ENCODE measurements at regions of chr7 and their contacts with region 1.

Region 1: GRCh38 chr7:19747740-19748339 is 25.6 kb downstream of the TMEM196 start:
- DNase-seq: peak; percentile 49
- ATAC-seq: peak; percentile 87
- H3K4me3 ChIP-seq: no peak overlapping the region
- H3K27ac ChIP-seq: no peak overlapping the region
- H3K4me1 ChIP-seq: no peaks in the 10 kb centered on the region
- H3K27me3 ChIP-seq: no peaks in the 10 kb centered on the region
- CTCF ChIP-seq: peak; percentile 49 to 70 (median 64); a peak in 5 of 6 replicates
- POLR2A ChIP-seq: no peak
- RAD21 ChIP-seq: peak; percentile 76

Region 2: GRCh38 chr7:19713676-19714075 is 34.2 kb before region 1 on chr7:
- CTCF ChIA-PET with region 1: interaction called, 16 read pairs
- POLR2A ChIA-PET with region 1: no interaction called
- RAD21 ChIA-PET with region 1: interaction called in 1 of 2 experiments, 3 read pairs
- intact Hi-C with region 1: no loop called
- DNase-seq: peak; percentile 51
- ATAC-seq: peak; percentile 48; the same call in 1 of the 2 replicates
- H3K4me3 ChIP-seq: no peak overlapping the region
- H3K27ac ChIP-seq: no peak overlapping the region
- H3K4me1 ChIP-seq: peaks cover 0 to 7% of the 10 kb centered on the region in 2 experiments; a peak in 2 of 4 replicates
- H3K27me3 ChIP-seq: no peaks in the 10 kb centered on the region
- CTCF ChIP-seq: peak; percentile 50 to 74 (median 53); a peak in 5 of 6 replicates
- POLR2A ChIP-seq: no peak
- RAD21 ChIP-seq: peak; percentile 64

Region 3: DNA sequence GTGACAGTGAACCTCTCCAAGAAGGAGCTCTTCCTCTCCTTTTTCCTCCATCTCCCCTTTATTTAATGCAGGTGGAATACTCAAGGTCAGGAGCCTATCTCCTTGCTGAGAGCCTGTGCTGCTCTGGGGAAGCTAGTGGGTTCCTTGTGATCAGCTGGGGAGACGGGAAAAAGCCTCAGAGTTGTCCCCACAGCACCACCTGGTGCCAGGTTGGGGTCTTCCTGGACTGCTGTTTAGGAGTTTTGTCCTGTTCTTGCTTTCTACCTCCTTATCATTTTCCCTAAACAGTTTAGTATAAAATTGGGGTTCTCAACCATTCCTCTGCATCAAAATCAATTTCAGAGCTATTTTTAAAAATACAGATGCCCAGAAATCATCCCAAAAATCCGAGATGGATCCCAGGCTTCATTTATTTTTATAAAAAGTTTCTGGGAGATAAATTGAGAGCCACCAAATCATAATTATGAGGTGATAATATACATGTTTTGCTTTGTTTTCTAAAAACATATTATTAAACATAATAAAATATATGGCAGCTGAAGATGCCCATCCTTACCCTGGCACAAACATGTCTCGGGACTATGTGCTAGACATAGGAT is 425.0 kb after region 1 on chr7:
- CTCF ChIA-PET with region 1: interaction called, 21 read pairs
- POLR2A ChIA-PET with region 1: no interaction called
- RAD21 ChIA-PET with region 1: interaction called in 1 of 2 experiments, 4 read pairs
- intact Hi-C with region 1: loop called (anchors 2 kb)
- DNase-seq: peak; percentile 52
- ATAC-seq: peak; percentile 98
- H3K4me3 ChIP-seq: no peak overlapping the region
- H3K27ac ChIP-seq: no peak overlapping the region
- H3K4me1 ChIP-seq: no peaks in the 10 kb centered on the region
- H3K27me3 ChIP-seq: no peaks in the 10 kb centered on the region
- CTCF ChIP-seq: peak; percentile 61 to 80 (median 78); a peak in 5 of 6 replicates
- POLR2A ChIP-seq: no peak
- RAD21 ChIP-seq: peak; percentile 77

Region 4: GRCh38 chr7:20183086-20183485 is 435.2 kb after region 1 on chr7:
- CTCF ChIA-PET with region 1: no interaction called
- POLR2A ChIA-PET with region 1: no interaction called
- RAD21 ChIA-PET with region 1: no interaction called
- intact Hi-C with region 1: no loop called
- DNase-seq: no peak
- ATAC-seq: no peak
- H3K4me3 ChIP-seq: no peak overlapping the region
- H3K27ac ChIP-seq: no peak overlapping the region
- H3K4me1 ChIP-seq: no peaks in the 10 kb centered on the region
- H3K27me3 ChIP-seq: no peaks in the 10 kb centered on the region
- CTCF ChIP-seq: no peak
- POLR2A ChIP-seq: no peak
- RAD21 ChIP-seq: no peak

Region 5: GRCh38 chr7:20199015-20199737 is 451.3 kb after region 1 on chr7:
- CTCF ChIA-PET with region 1: interaction called, 12 read pairs
- POLR2A ChIA-PET with region 1: no interaction called
- RAD21 ChIA-PET with region 1: interaction called, 3 read pairs
- intact Hi-C with region 1: loop called (anchors 5 kb)
- DNase-seq: peak; percentile 94
- ATAC-seq: peak; percentile 95
- H3K4me3 ChIP-seq: peak overlapping the region in 1 of 2 experiments; percentile 27; a peak in 2 of 4 replicates
- H3K27ac ChIP-seq: peak overlapping the region; percentile 47; the same call in 1 of the 2 replicates
- H3K4me1 ChIP-seq: peaks cover 20 to 39% of the 10 kb centered on the region in 2 experiments
- H3K27me3 ChIP-seq: no peaks in the 10 kb centered on the region
- CTCF ChIP-seq: no peak
- POLR2A ChIP-seq: no peak
- RAD21 ChIP-seq: no peak

Region 6: DNA sequence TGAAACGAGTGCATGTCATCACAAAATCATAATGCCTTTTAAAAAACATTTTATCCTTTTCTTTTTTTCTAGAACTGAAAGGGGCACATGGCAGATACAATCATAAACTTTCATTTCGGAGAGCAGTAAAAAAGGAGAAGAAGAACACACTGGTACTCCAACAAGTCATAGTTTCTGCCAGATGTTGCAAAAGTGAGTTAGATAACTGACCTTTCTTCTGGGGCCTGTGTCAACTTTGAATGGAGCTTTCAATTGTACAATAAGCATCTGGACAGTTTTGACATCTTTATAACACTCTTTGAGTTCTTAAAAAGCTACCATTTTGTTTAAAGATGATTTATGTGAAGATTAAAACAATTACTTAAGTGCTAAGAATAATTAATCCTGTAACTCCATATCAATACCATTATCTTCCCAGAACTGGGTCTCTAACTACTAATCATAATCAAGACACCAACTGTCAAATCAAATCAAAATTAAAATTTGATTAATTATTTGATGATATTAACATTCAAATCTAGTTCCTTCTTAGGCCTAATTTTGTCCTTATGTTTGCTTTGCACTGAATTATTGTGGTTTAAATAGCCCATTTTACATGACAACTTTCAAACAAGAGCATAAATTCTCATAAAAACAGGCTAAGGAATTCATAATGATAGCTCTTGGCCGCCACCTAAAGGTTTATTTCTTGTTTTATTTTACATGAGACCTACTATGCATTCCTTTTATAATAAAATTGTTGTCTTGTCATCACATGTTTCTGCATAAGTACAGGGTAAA is 563.3 kb after region 1 on chr7:
- CTCF ChIA-PET with region 1: interaction called, 5 read pairs
- POLR2A ChIA-PET with region 1: no interaction called
- RAD21 ChIA-PET with region 1: no interaction called
- intact Hi-C with region 1: loop called (anchors 2 kb)
- DNase-seq: peak; percentile 38
- ATAC-seq: no peak
- H3K4me3 ChIP-seq: no peak overlapping the region
- H3K27ac ChIP-seq: no peak overlapping the region
- H3K4me1 ChIP-seq: no peaks in the 10 kb centered on the region
- H3K27me3 ChIP-seq: no peaks in the 10 kb centered on the region
- CTCF ChIP-seq: peak; percentile 22 to 60 (median 59); a peak in 3 of 6 replicates
- POLR2A ChIP-seq: no peak
- RAD21 ChIP-seq: peak; percentile 75

Region 7: GRCh38 chr7:20647908-20648776 is 900.3 kb after region 1 on chr7:
- CTCF ChIA-PET with region 1: interaction called, 11 read pairs
- POLR2A ChIA-PET with region 1: no interaction called
- RAD21 ChIA-PET with region 1: no interaction called
- intact Hi-C with region 1: no loop called
- DNase-seq: peak; percentile 55
- ATAC-seq: peak; percentile 97
- H3K4me3 ChIP-seq: no peak overlapping the region
- H3K27ac ChIP-seq: no peak overlapping the region
- H3K4me1 ChIP-seq: peaks cover 0 to 4% of the 10 kb centered on the region in 2 experiments; a peak in 1 of 4 replicates
- H3K27me3 ChIP-seq: no peaks in the 10 kb centered on the region
- CTCF ChIP-seq: peak; percentile 51 to 79 (median 69)
- POLR2A ChIP-seq: no peak
- RAD21 ChIP-seq: peak; percentile 66

Measured in HCT116 (cell line).